ENCODE measurements at regions of chr6 and their contacts with region 1.

Region 1: GRCh38 chr6:127120787-127121636 is 2.5 kb downstream of the RSPO3 start:
- DNase-seq: peak; percentile 60 to 64
- ATAC-seq: peak; percentile 54 to 87 (median 83)
- H3K4me3 ChIP-seq: peak overlapping the region in 7 of 10 donors; percentile 31 to 60 (median 57)
- H3K27ac ChIP-seq: no peak overlapping the region
- H3K4me1 ChIP-seq: peaks cover 4 to 31% (median 25%) of the 10 kb centered on the region in 9 donors
- H3K27me3 ChIP-seq: peaks cover 10 to 96% (median 68%) of the 10 kb centered on the region in 7 donors
- CTCF ChIP-seq: peak in 8 of 9 donors; percentile 37 to 80 (median 72)

Region 2: DNA sequence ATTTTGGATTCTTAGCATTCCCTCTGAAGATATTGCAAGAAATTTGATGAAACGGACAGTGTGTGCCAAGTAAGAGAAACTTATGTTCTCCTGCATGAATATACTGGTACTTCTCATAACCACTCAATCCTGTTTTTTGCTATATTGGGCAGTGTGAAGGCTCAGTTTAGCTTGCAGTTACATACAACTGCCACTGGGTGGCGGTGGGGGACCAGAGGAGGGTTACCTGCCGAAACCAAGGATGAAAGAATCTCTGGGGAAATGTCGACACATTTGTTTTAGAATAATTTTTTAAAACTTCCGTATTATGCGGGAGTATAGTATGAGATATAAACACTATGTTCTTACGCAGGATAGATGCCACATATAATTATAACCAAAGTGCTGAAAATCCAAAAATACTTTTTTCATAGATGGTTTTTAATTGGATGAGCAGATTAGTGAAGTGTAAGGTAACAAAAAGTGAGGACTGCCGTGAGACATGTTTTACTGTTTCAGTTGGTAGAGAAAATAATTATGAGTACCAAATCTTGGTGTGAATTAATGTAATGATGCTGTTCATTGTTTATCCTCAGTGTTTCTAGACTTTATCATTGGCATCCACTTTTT is 1124.9 kb before region 1 on chr6:
- intact Hi-C with region 1: loop called in 4 of 10 experiments (anchors 2 to 10 kb)
- DNase-seq: peak; percentile 23 to 57
- ATAC-seq: peak; percentile 71 to 92 (median 82)
- H3K4me3 ChIP-seq: no peak overlapping the region
- H3K27ac ChIP-seq: no peak overlapping the region
- H3K4me1 ChIP-seq: peaks cover 0 to 22% (median 7%) of the 10 kb centered on the region in 9 donors
- H3K27me3 ChIP-seq: no peaks in the 10 kb centered on the region
- CTCF ChIP-seq: peak; percentile 92 to 98 (median 97)

Region 3: DNA sequence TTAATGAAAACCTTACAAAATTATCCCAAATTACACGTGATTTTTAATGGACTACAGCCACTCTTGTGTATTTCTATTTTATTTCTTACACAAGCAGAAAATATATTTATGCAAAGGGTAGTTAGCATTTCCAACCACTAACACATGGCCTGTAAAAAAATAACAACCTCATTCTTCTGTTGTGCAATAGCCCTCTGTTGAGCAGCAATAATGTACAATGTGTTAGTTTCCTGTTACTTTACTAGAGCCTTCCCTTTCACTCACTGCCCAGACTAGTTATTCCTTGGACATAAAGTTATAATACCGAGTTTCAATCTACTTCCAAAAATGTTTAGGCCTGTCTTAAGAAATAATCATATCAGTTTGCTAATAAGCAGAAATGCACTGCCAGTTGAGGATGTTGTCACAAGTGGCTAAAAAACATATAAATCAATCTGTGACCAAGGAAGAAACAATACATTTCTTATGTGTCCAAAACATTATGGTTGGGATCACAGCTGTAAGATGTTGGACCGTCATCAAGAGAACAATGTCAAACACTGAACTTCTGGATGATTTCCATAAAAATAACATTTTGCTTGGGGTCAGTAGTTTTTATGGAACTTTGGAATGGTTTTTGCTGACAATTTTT is 72.0 kb after region 1 on chr6:
- intact Hi-C with region 1: no loop called
- DNase-seq: no peak
- ATAC-seq: peak in 5 of 8 donors; percentile 52 to 78 (median 67)
- H3K4me3 ChIP-seq: no peak overlapping the region
- H3K27ac ChIP-seq: peak overlapping the region in 2 of 10 donors; percentile 56 to 59
- H3K4me1 ChIP-seq: peaks cover 0 to 18% (median 0%) of the 10 kb centered on the region in 9 donors
- H3K27me3 ChIP-seq: no peaks in the 10 kb centered on the region
- CTCF ChIP-seq: no peak

Region 4: GRCh38 chr6:127219869-127220268 is 98.9 kb after region 1 on chr6:
- intact Hi-C with region 1: no loop called
- DNase-seq: peak in 1 of 2 donors; percentile 24
- ATAC-seq: peak in 4 of 8 donors; percentile 53 to 77 (median 69)
- H3K4me3 ChIP-seq: no peak overlapping the region
- H3K27ac ChIP-seq: peak overlapping the region in 3 of 10 donors; percentile 40 to 64 (median 44)
- H3K4me1 ChIP-seq: peaks cover 0 to 6% (median 0%) of the 10 kb centered on the region in 9 donors
- H3K27me3 ChIP-seq: peaks cover 0 to 1% (median 0%) of the 10 kb centered on the region in 7 donors
- CTCF ChIP-seq: no peak

Region 5: DNA sequence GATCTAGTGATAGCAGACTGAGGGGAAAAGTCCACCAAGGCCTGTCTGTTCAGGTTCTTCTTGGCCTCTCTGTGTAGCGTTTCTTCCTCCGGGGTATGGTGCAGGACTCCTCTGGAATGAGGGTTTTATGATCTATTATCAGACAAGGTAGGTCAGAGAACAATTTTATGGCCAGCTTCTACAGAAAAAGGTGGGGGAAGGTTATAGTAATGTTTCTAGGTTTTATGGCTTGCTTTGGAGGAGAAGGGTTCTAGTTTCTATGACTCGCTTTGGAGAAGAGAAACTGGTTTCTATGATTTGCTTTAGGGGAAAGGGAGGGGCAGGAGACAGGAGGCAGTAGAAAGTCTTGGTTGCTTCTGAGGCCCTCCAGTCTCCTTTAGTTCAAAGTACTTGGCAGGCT is 1617.1 kb after region 1 on chr6:
- intact Hi-C with region 1: loop called in 1 of 10 experiments (anchors 5 kb)
- DNase-seq: no peak
- ATAC-seq: no peak
- H3K4me3 ChIP-seq: no peak overlapping the region
- H3K27ac ChIP-seq: no peak overlapping the region
- H3K4me1 ChIP-seq: no peaks in the 10 kb centered on the region
- H3K27me3 ChIP-seq: no peaks in the 10 kb centered on the region
- CTCF ChIP-seq: no peak

Measured in heart right ventricle (tissue), 16 donors.